Activated CD4-positive, alpha-beta T cell treated with anti-CD3 and anti-CD28 coated beads, Interleukin-2, amount 10 ng/mL, durations not matched to agents 7 days and 5 days (primary cell): ENCODE measurements at regions of chr2 and their contacts with region 1.

Region 1: DNA sequence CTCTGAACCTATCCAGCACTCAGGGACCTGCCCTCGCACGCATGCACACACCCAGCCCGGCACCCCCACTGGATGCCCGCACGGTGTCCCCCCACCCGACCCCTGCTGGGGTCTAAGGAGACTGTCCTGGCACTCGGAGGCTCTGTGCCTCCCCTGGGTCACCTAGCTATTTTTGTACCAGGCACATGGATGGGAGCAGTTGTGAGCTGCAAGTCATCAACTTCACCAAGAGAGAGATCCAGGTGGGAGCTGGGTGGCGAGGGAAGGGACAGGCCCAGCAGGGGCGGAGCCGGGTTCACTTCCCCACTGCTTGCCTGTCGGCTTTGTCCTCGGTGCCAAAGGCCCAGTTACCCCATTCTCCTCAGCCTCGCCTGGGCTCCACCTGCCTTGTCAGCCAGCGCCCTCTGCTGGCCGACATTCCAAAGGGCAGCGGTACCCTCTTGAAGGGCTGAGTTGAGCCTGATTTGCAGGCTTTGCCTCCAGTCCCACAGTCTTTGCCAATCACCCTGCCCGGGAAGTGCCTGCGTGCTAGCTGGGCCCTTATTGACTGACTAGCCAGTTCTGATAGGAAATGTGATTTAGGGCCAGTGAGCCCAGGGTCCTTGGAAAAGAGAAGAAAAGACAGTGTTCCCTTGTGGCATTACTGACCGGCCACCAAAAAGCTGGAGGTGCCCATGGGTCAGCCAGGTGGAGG is 5.8 kb downstream of the NT5DC4 start:
- DNase-seq: peak; percentile 91
- H3K4me3 Mint-ChIP-seq: no peak overlapping the region
- H3K27ac Mint-ChIP-seq: peak overlapping the region; percentile 36
- H3K4me1 Mint-ChIP-seq: peaks cover 21% of the 10 kb centered on the region
- H3K27me3 Mint-ChIP-seq: peaks cover 7% of the 10 kb centered on the region

Region 2: DNA sequence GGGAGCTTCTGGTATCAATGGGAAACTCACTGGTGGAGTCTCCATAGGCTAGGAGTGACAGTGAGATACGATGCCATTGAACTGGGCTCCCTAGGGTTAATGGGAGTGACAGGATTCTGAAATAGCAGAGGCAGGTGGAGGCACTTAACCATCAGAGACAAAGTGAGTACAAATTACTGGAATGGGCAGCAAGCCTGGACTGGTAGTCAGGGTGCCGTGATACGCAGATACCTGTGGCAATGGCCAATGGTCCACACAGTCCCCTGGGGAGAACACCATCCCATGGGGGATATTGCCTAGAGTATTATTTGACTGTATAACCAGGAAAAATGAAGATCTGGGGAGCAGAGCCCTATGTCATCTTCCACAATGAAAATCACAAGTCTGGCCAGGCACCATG is 124.9 kb before region 1 on chr2:
- CTCF ChIA-PET with region 1: interaction called, 62 read pairs
- POLR2A ChIA-PET with region 1: no interaction called
- DNase-seq: no peak
- H3K4me3 Mint-ChIP-seq: no peak overlapping the region
- H3K27ac Mint-ChIP-seq: no peak overlapping the region
- H3K4me1 Mint-ChIP-seq: peaks cover 8% of the 10 kb centered on the region
- H3K27me3 Mint-ChIP-seq: no peaks in the 10 kb centered on the region

Region 3: DNA sequence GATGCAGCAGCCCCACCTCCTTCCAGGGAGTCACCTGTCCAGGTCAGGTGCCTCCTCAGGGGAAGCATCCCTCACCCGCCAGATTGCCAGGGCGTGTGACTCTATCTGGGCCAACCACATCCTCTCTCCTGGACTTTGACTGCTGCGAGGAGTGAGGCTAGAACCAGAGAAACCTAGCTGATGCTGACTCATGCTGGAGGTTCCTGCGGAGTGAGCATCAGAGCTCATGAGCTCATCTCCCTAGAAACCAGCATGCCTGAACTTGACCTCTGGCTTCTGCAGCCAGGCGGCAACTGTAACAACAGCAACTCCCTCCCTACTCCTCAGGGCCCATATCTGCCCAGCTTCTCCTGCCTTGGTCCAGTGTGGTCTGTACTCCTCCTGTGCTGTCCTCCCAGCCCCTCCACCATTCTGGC is 34.1 kb before region 1 on chr2:
- CTCF ChIA-PET with region 1: interaction called, 16 read pairs
- POLR2A ChIA-PET with region 1: no interaction called
- DNase-seq: peak; percentile 76
- H3K4me3 Mint-ChIP-seq: peak overlapping the region; percentile 2
- H3K27ac Mint-ChIP-seq: peak overlapping the region; percentile 88
- H3K4me1 Mint-ChIP-seq: peaks cover 34% of the 10 kb centered on the region
- H3K27me3 Mint-ChIP-seq: no peaks in the 10 kb centered on the region

Region 4: GRCh38 chr2:112712903-112713584 is 13.6 kb before region 1 on chr2:
- CTCF ChIA-PET with region 1: interaction called, 29 read pairs
- POLR2A ChIA-PET with region 1: no interaction called
- DNase-seq: no peak
- H3K4me3 Mint-ChIP-seq: no peak overlapping the region
- H3K27ac Mint-ChIP-seq: no peak overlapping the region
- H3K4me1 Mint-ChIP-seq: peaks cover 22% of the 10 kb centered on the region
- H3K27me3 Mint-ChIP-seq: peaks cover 21% of the 10 kb centered on the region

Region 5: GRCh38 chr2:112794131-112794733 is 67.6 kb after region 1 on chr2:
- CTCF ChIA-PET with region 1: no interaction called
- POLR2A ChIA-PET with region 1: no interaction called
- DNase-seq: peak; percentile 27
- H3K4me3 Mint-ChIP-seq: no peak overlapping the region
- H3K27ac Mint-ChIP-seq: no peak overlapping the region
- H3K4me1 Mint-ChIP-seq: peaks cover 24% of the 10 kb centered on the region
- H3K27me3 Mint-ChIP-seq: peaks cover 1% of the 10 kb centered on the region

Region 6: GRCh38 chr2:112848833-112849232 is 122.2 kb after region 1 on chr2:
- CTCF ChIA-PET with region 1: no interaction called
- POLR2A ChIA-PET with region 1: no interaction called
- DNase-seq: no peak
- H3K4me3 Mint-ChIP-seq: no peak overlapping the region
- H3K27ac Mint-ChIP-seq: no peak overlapping the region
- H3K4me1 Mint-ChIP-seq: no peaks in the 10 kb centered on the region
- H3K27me3 Mint-ChIP-seq: peaks cover 8% of the 10 kb centered on the region

Region 7: GRCh38 chr2:112947374-112947773 is 220.7 kb after region 1 on chr2:
- CTCF ChIA-PET with region 1: no interaction called
- POLR2A ChIA-PET with region 1: no interaction called
- DNase-seq: no peak
- H3K4me3 Mint-ChIP-seq: no peak overlapping the region
- H3K27ac Mint-ChIP-seq: no peak overlapping the region
- H3K4me1 Mint-ChIP-seq: no peaks in the 10 kb centered on the region
- H3K27me3 Mint-ChIP-seq: peaks cover 28% of the 10 kb centered on the region